CD14-positive monocyte (primary cell): ENCODE measurements at regions of chr10 and their contacts with region 1.

Region 1: DNA sequence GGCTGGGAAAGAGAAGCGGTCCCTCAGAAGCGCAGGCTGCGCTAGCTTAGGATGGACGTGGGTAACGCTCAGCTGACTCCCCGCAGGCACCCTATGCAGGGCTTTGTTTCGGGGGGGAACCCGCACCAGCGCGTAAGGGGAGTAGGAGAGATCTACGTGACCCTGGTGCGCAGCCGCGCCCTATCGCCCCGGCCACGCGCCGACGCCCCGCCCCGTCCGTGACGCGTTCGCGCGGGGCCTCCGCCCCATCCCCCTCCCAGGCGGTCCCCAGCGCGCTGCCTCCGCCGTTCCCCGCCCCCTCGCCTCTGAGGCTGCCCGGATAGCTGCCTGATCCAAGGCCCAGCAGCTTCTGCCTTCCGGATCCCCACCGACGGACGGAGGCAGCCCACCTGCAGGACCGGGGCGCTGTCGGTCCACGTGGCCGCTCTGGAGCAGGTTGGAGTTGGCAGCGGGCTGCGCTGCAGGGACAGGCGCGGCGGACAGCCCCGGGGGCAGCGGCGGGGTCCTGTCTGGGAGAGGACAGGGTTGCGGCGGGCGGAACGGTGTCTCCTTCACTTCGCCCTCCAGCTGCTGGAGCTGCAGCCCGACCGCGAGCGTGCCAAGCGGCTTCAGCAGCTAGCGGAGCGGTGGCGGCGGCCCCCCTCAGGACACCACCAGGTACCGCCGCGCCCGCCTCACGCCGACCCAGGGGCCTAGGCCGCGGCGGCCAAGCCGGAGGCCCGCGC is at the start of gene VDAC2:
- DNase-seq: peak; percentile 85 to 92 (median 91)
- H3K4me3 ChIP-seq: peak within 1 kb of the TSS; percentile 81 to 99 (median 96)
- H3K4me3 Mint-ChIP-seq: peak within 1 kb of the TSS; percentile 99
- H3K27ac ChIP-seq: peak within 1 kb of the TSS; percentile 100
- H3K27ac Mint-ChIP-seq: peak within 1 kb of the TSS; percentile 100
- H3K4me1 ChIP-seq: peaks cover 18 to 23% of the 10 kb centered on the region in 2 donors
- H3K4me1 Mint-ChIP-seq: peaks cover 27% of the 10 kb centered on the region
- H3K27me3 ChIP-seq: no peaks in the 10 kb centered on the region
- H3K27me3 Mint-ChIP-seq: peaks cover 0 to 2% (median 0%) of the 10 kb centered on the region in 3 donors
- CTCF ChIP-seq: no peak
- polyA plus RNA-seq, gene VDAC2: 71.2 to 154 (median 139) TPM

Region 2: GRCh38 chr10:74500026-74500704 is 710.3 kb before region 1 on chr10:
- intact Hi-C with region 1: no loop called
- DNase-seq: no peak
- H3K4me3 ChIP-seq: no peak overlapping the region
- H3K4me3 Mint-ChIP-seq: no peak overlapping the region
- H3K27ac ChIP-seq: no peak overlapping the region
- H3K27ac Mint-ChIP-seq: no peak overlapping the region
- H3K4me1 ChIP-seq: peaks cover 9 to 16% of the 10 kb centered on the region in 2 donors
- H3K4me1 Mint-ChIP-seq: peaks cover 15% of the 10 kb centered on the region
- H3K27me3 ChIP-seq: no peaks in the 10 kb centered on the region
- H3K27me3 Mint-ChIP-seq: peaks cover 0 to 4% (median 0%) of the 10 kb centered on the region in 3 donors
- CTCF ChIP-seq: no peak

Region 3: GRCh38 chr10:75111367-75111906 is 99.0 kb before region 1 on chr10 and contains the start of gene SAMD8:
- intact Hi-C with region 1: loop called in 1 of 2 experiments (anchors 5 kb)
- DNase-seq: peak; percentile 97 to 98 (median 98)
- H3K4me3 ChIP-seq: peak within 1 kb of the TSS; percentile 53 to 95 (median 87)
- H3K4me3 Mint-ChIP-seq: peak within 1 kb of the TSS; percentile 99 to 100
- H3K27ac ChIP-seq: peak within 1 kb of the TSS; percentile 96 to 100
- H3K27ac Mint-ChIP-seq: peak within 1 kb of the TSS; percentile 98 to 100 (median 99)
- H3K4me1 ChIP-seq: peaks cover 29 to 42% of the 10 kb centered on the region in 2 donors
- H3K4me1 Mint-ChIP-seq: peaks cover 52% of the 10 kb centered on the region
- H3K27me3 ChIP-seq: no peaks in the 10 kb centered on the region
- H3K27me3 Mint-ChIP-seq: peaks cover 0 to 4% (median 3%) of the 10 kb centered on the region in 3 donors
- CTCF ChIP-seq: peak; percentile 16
- polyA plus RNA-seq, gene SAMD8: 13.0 to 18.8 (median 13.7) TPM

Region 4: GRCh38 chr10:75121322-75121721 is 89.1 kb before region 1 on chr10:
- intact Hi-C with region 1: loop called in 1 of 2 experiments (anchors 5 kb)
- DNase-seq: no peak
- H3K4me3 ChIP-seq: no peak overlapping the region
- H3K4me3 Mint-ChIP-seq: no peak overlapping the region
- H3K27ac ChIP-seq: peak overlapping the region in 1 of 2 donors; percentile 4
- H3K27ac Mint-ChIP-seq: peak overlapping the region in 1 of 7 donors; percentile 10
- H3K4me1 ChIP-seq: no peaks in the 10 kb centered on the region
- H3K4me1 Mint-ChIP-seq: peaks cover 6% of the 10 kb centered on the region
- H3K27me3 ChIP-seq: no peaks in the 10 kb centered on the region
- H3K27me3 Mint-ChIP-seq: no peaks in the 10 kb centered on the region
- CTCF ChIP-seq: no peak